MCF 10A (cell line): ENCODE measurements at regions of chr15 and their contacts with region 1.

Region 1: DNA sequence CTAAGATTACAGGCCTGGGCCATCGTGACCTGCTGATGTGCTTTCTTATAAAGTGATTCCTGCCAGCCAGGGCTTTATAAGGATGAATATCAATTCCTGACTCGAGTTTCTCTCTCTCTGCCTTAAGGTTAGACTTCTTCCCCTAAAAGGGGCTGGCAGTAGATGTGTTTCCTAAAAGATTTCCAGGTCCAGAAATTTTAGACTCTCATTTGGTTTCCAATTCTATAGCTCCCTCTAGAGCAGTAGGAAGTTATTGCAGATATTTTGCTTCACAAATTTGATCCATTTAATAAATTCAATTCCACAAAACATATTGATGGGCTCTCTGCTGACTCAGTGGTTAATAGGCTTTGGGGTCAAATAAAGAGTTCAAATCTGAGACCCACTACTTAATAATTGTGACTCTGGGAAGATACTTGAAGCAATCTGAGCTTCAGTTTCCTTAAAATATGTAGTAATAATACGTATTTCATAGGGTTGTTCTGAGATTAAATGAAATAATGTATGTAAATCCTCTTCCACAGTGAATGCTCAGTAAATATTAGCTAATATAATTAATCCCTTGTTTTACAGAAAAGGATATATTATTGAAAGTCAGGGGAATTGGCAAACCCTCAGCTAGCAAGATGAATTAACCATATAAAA is 2.1 kb downstream of the TRIM69 start:
- DNase-seq: peak; percentile 69
- H3K4me3 Mint-ChIP-seq: no peak overlapping the region
- H3K27ac Mint-ChIP-seq: no peak overlapping the region
- H3K4me1 Mint-ChIP-seq: peaks cover 7% of the 10 kb centered on the region
- H3K27me3 Mint-ChIP-seq: no peaks in the 10 kb centered on the region
- CTCF ChIP-seq: peak; percentile 73

Region 2: DNA sequence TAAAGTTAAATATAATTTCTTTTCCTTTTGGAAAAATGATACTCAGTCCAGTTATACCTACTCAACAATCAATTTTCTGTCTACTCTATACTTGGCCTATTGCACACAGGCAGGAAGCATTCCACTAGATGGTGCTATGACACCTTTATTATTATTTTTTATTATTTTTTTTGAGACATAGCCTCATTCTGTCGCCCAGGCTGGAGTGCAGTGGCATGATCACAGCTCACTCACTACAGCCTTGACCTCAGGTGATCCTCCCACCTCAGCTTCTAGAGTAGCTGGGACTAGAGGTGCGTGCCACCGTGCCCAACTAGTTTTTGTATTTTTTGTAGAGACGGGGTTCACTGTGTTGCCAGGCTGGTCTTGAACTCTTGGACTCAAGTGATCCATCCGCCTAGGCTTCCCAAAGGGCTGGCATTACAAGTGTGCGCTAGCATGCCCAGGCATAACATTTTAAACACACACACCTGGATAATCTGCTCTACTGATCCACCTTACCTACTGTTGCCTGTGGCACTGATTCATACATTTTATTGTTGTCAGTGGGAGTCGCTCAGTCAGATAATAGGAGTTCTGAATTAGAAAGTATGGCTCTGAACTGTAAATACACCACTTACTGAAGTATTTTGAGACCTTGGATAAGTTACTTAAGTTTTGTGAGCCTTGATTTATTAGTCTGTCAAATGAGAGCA is 145.3 kb before region 1 on chr15:
- CTCF ChIA-PET with region 1: interaction called, 6 read pairs
- POLR2A ChIA-PET with region 1: no interaction called
- intact Hi-C with region 1: loop called (anchors 5 kb)
- DNase-seq: peak; percentile 28
- H3K4me3 Mint-ChIP-seq: no peak overlapping the region
- H3K27ac Mint-ChIP-seq: no peak overlapping the region
- H3K4me1 Mint-ChIP-seq: no peaks in the 10 kb centered on the region
- H3K27me3 Mint-ChIP-seq: no peaks in the 10 kb centered on the region
- CTCF ChIP-seq: peak; percentile 38

Region 3: GRCh38 chr15:44663409-44664308 is 74.8 kb before region 1 on chr15 and contains the start of gene SPG11:
- CTCF ChIA-PET with region 1: interaction called, 83 read pairs
- POLR2A ChIA-PET with region 1: interaction called, 63 read pairs
- intact Hi-C with region 1: loop called (anchors 1 kb)
- DNase-seq: peak; percentile 97
- H3K4me3 Mint-ChIP-seq: peak within 1 kb of the TSS; percentile 97
- H3K27ac Mint-ChIP-seq: peak within 1 kb of the TSS; percentile 33
- H3K4me1 Mint-ChIP-seq: peaks cover 12% of the 10 kb centered on the region
- H3K27me3 Mint-ChIP-seq: no peaks in the 10 kb centered on the region
- CTCF ChIP-seq: peak; percentile 90
- total RNA-seq, gene SPG11: 65.1 and 69.0 TPM in 2 replicates

Region 4: DNA sequence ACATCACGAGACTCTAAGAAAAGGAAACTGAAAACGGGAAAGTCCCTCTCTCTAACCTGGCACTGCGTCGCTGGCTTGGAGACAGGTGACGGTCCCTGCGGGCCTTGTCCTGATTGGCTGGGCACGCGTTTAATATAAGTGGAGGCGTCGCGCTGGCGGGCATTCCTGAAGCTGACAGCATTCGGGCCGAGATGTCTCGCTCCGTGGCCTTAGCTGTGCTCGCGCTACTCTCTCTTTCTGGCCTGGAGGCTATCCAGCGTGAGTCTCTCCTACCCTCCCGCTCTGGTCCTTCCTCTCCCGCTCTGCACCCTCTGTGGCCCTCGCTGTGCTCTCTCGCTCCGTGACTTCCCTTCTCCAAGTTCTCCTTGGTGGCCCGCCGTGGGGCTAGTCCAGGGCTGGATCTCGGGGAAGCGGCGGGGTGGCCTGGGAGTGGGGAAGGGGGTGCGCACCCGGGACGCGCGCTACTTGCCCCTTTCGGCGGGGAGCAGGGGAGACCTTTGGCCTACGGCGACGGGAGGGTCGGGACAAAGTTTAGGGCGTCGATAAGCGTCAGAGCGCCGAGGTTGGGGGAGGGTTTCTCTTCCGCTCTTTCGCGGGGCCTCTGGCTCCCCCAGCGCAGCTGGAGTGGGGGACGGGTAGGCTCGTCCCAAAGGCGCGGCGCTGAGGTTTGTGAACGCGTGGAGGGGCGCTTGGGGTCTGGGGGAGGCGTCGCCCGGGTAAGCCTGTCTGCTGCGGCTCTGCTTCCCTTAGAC is 26.9 kb before region 1 on chr15 and contains the start of gene B2M:
- CTCF ChIA-PET with region 1: interaction called, 26 read pairs
- POLR2A ChIA-PET with region 1: interaction called, 60 read pairs
- intact Hi-C with region 1: loop called (anchors 1 kb)
- DNase-seq: peak; percentile 98
- H3K4me3 Mint-ChIP-seq: peak within 1 kb of the TSS; percentile 92
- H3K27ac Mint-ChIP-seq: peak within 1 kb of the TSS; percentile 96
- H3K4me1 Mint-ChIP-seq: peaks cover 23% of the 10 kb centered on the region
- H3K27me3 Mint-ChIP-seq: no peaks in the 10 kb centered on the region
- CTCF ChIP-seq: no peak
- total RNA-seq, gene B2M: 605 and 755 TPM in 2 replicates

Region 5: GRCh38 chr15:44836094-44836493 is 97.6 kb after region 1 on chr15:
- CTCF ChIA-PET with region 1: no interaction called
- POLR2A ChIA-PET with region 1: no interaction called
- intact Hi-C with region 1: no loop called
- DNase-seq: no peak
- H3K4me3 Mint-ChIP-seq: no peak overlapping the region
- H3K27ac Mint-ChIP-seq: no peak overlapping the region
- H3K4me1 Mint-ChIP-seq: peaks cover 7% of the 10 kb centered on the region
- H3K27me3 Mint-ChIP-seq: no peaks in the 10 kb centered on the region
- CTCF ChIP-seq: no peak